HCT116 (cell line): ENCODE measurements at regions of chr2 and their contacts with region 1.

Region 1: GRCh38 chr2:84495539-84496146 is 20.7 kb upstream of the DNAH6 start:
- DNase-seq: peak; percentile 70
- ATAC-seq: peak; percentile 88
- H3K4me3 ChIP-seq: no peak overlapping the region
- H3K27ac ChIP-seq: no peak overlapping the region
- H3K4me1 ChIP-seq: no peaks in the 10 kb centered on the region; a peak in 1 of 4 replicates
- H3K27me3 ChIP-seq: no peaks in the 10 kb centered on the region
- CTCF ChIP-seq: peak; percentile 61 to 84 (median 61)
- POLR2A ChIP-seq: no peak
- RAD21 ChIP-seq: peak; percentile 90

Region 2: DNA sequence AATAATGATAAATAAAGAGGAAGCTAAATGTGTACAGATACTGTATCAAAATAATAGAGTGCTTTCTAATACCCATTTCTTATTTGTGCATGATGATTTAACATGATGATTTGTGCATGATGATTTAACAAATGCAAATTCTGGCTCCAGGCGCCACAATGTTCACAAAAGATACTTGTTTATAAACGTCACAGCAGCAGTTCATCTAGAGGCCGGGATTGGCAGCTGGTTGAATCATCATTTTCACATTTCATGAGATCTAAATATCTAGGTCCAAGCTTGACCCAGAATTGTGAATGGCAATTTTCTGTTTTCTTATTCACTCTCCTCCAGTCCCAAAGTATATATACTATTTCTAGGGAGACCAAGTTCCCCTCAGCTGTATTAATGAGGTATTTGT is 358.6 kb before region 1 on chr2:
- CTCF ChIA-PET with region 1: no interaction called
- POLR2A ChIA-PET with region 1: no interaction called
- RAD21 ChIA-PET with region 1: no interaction called
- intact Hi-C with region 1: no loop called
- DNase-seq: no peak
- ATAC-seq: no peak
- H3K4me3 ChIP-seq: no peak overlapping the region
- H3K27ac ChIP-seq: no peak overlapping the region
- H3K4me1 ChIP-seq: no peaks in the 10 kb centered on the region
- H3K27me3 ChIP-seq: 0 out of 2 replicates have a peak, but pooled peaks cover 3% of the 10 kb centered on the region
- CTCF ChIP-seq: no peak
- POLR2A ChIP-seq: no peak
- RAD21 ChIP-seq: no peak

Region 3: DNA sequence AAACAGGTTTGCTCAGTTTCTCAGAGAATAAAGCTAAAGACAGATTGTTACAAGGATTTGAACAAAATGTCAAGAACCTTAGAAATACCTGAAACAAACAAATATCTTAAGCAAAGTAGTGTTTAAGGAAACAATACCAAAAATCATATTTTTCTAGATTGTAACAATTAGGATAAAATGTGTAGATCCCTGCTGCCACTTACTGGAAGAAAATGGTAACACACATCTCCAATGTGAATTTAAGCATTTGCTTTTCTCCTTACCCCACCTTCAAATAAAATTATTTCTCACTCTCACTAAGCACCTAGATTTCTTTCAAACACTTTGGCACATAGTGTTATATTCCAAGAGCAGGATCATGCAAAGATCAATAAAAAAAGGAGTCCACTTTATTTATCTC is 71.5 kb before region 1 on chr2:
- CTCF ChIA-PET with region 1: no interaction called
- POLR2A ChIA-PET with region 1: no interaction called
- RAD21 ChIA-PET with region 1: no interaction called
- intact Hi-C with region 1: no loop called
- DNase-seq: no peak
- ATAC-seq: no peak
- H3K4me3 ChIP-seq: no peak overlapping the region
- H3K27ac ChIP-seq: no peak overlapping the region
- H3K4me1 ChIP-seq: no peaks in the 10 kb centered on the region
- H3K27me3 ChIP-seq: no peaks in the 10 kb centered on the region
- CTCF ChIP-seq: peak; percentile 4 to 64 (median 45); a peak in 3 of 6 replicates
- POLR2A ChIP-seq: no peak
- RAD21 ChIP-seq: peak; percentile 55

Region 4: DNA sequence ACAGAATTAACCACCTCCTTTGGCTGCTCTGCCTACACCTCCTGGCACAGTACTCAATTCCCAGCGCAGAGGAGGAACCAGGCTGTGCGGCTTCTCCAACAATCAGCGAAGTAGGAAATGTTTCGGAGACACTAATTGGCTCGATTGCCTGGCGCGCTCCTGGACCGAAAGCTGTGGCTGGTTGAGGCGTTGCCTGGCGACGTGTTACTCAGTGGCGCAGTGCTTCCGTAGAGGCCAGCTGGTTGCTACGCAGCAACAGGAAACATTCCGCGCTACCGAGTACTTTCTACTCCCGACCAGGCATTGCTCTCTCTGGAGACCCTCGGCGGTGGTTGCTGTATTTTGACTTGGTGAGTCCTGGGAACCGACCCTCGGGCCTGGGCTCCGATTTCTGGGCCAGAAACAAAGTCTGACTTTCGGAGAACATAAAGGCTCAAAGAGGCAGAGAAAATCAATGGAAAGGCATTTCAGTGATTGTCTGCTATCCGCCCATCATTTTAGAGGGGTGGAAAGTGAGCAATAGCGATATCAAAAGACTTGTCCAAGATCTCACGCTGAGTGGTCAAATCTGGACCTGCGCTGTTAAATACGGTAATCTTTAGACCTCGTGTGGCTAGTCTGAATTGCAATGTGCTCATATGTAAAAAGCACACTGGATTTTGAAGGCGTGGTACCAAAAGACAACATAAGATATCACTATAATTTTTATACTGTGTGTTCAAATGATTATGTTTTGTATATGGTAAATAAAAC is 20.8 kb after region 1 on chr2 and contains the start of gene DNAH6:
- CTCF ChIA-PET with region 1: no interaction called
- POLR2A ChIA-PET with region 1: no interaction called
- RAD21 ChIA-PET with region 1: no interaction called
- intact Hi-C with region 1: no loop called
- DNase-seq: peak; percentile 66
- ATAC-seq: peak; percentile 99
- H3K4me3 ChIP-seq: peak within 1 kb of the TSS; percentile 48 to 62
- H3K27ac ChIP-seq: no peak within 1 kb of the TSS
- H3K4me1 ChIP-seq: peaks cover 2 to 9% of the 10 kb centered on the region in 2 experiments; a peak in 2 of 4 replicates
- H3K27me3 ChIP-seq: no peaks in the 10 kb centered on the region
- CTCF ChIP-seq: no peak
- POLR2A ChIP-seq: no peak
- RAD21 ChIP-seq: no peak
- total RNA-seq, gene DNAH6: 1.6 TPM

Region 5: GRCh38 chr2:84631047-84631446 is 135.4 kb after region 1 on chr2:
- CTCF ChIA-PET with region 1: interaction called, 6 read pairs
- POLR2A ChIA-PET with region 1: no interaction called
- RAD21 ChIA-PET with region 1: interaction called in 1 of 2 experiments, 3 read pairs
- intact Hi-C with region 1: loop called (anchors 1 kb)
- DNase-seq: peak; percentile 53
- ATAC-seq: peak; percentile 95
- H3K4me3 ChIP-seq: no peak overlapping the region
- H3K27ac ChIP-seq: no peak overlapping the region
- H3K4me1 ChIP-seq: no peaks in the 10 kb centered on the region
- H3K27me3 ChIP-seq: no peaks in the 10 kb centered on the region
- CTCF ChIP-seq: peak; percentile 58 to 76 (median 73)
- POLR2A ChIP-seq: no peak
- RAD21 ChIP-seq: peak; percentile 89

Region 6: DNA sequence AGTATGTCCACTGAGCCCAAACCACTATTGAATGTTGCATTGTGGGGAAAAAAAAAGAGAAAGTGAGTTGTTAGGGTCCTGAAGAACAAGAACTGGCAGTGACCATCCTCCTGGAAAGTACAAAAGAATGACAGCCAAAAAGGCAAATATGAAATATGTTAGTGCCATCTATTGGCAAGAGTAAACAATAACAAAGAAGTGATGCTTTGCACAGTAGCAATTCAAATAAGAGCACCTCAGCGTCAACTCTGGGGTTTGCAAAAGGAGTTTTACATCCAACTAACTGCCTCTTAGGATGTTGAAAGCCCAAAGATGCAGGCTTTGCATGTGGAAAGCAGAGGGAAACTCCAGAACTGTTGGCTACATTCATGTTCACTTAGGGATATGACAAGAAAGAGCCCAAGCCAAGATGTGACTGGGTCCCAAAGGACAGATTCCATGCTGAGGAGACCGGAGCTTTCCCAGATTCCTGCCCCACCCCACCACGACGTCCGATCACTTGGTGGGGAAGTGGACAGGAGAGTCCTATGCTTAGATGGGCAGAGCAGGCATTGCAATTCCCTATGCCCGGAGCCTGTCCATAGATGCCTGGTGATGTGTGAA is 369.6 kb after region 1 on chr2:
- CTCF ChIA-PET with region 1: no interaction called
- POLR2A ChIA-PET with region 1: no interaction called
- RAD21 ChIA-PET with region 1: no interaction called
- intact Hi-C with region 1: loop called (anchors 1 kb)
- DNase-seq: no peak
- ATAC-seq: peak; percentile 75
- H3K4me3 ChIP-seq: no peak overlapping the region
- H3K27ac ChIP-seq: no peak overlapping the region
- H3K4me1 ChIP-seq: no peaks in the 10 kb centered on the region
- H3K27me3 ChIP-seq: no peaks in the 10 kb centered on the region
- CTCF ChIP-seq: peak; percentile 30 to 57 (median 54); a peak in 4 of 6 replicates
- POLR2A ChIP-seq: no peak
- RAD21 ChIP-seq: peak; percentile 77

Region 7: GRCh38 chr2:84881581-84882414 is 386.2 kb after region 1 on chr2:
- CTCF ChIA-PET with region 1: interaction called, 8 read pairs
- POLR2A ChIA-PET with region 1: no interaction called
- RAD21 ChIA-PET with region 1: no interaction called
- intact Hi-C with region 1: loop called (anchors 1 kb)
- DNase-seq: peak; percentile 71
- ATAC-seq: peak; percentile 86
- H3K4me3 ChIP-seq: peak overlapping the region; percentile 51 to 63
- H3K27ac ChIP-seq: no peak overlapping the region
- H3K4me1 ChIP-seq: peaks cover 5 to 24% of the 10 kb centered on the region in 2 experiments; a peak in 3 of 4 replicates
- H3K27me3 ChIP-seq: no peaks in the 10 kb centered on the region; the same call in 1 of the 2 replicates
- CTCF ChIP-seq: peak; percentile 76 to 79 (median 78); a peak in 5 of 6 replicates
- POLR2A ChIP-seq: no peak
- RAD21 ChIP-seq: peak; percentile 75